Lower lobe of right lung (tissue), 2 donors: ENCODE measurements at regions of chr6 and their contacts with region 1.

Region 1: GRCh38 chr6:143575440-143575839 is 63.9 kb upstream of the FUCA2 start:
- DNase-seq: no peak
- ATAC-seq: peak; percentile 92 to 93
- H3K4me3 ChIP-seq: no peak overlapping the region
- H3K27ac ChIP-seq: no peak overlapping the region
- H3K4me1 ChIP-seq: no peaks in the 10 kb centered on the region
- H3K27me3 ChIP-seq: no peaks in the 10 kb centered on the region
- CTCF ChIP-seq: peak; percentile 91

Region 2: GRCh38 chr6:143822584-143823024 is 247.2 kb after region 1 on chr6:
- intact Hi-C with region 1: no loop called
- DNase-seq: no peak
- ATAC-seq: peak; percentile 49 to 76
- H3K4me3 ChIP-seq: no peak overlapping the region
- H3K27ac ChIP-seq: no peak overlapping the region
- H3K4me1 ChIP-seq: peaks cover 11% of the 10 kb centered on the region
- H3K27me3 ChIP-seq: no peaks in the 10 kb centered on the region
- CTCF ChIP-seq: no peak

Region 3: DNA sequence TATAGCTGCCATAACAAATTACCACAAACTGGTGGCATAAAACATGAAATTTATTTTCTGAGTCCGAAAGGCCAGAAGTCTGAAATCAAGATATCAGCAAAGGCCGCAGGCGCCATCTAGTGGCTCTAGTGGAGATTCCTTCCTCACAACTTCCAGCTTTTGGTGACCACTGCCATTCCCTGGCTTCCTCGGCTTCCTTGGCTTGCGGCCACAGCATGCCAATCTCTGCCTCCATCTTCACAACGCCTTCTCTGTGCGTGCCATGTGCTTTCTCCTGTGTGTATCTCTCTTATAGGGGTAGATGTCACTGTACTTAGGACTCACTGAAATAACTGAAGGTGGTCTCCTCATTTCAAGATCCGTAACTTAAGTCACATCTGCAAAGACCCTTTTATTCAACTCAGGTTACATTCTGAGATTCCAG is 438.1 kb after region 1 on chr6:
- intact Hi-C with region 1: loop called (anchors 10 kb)
- DNase-seq: peak; percentile 87
- ATAC-seq: peak; percentile 82 to 83
- H3K4me3 ChIP-seq: no peak overlapping the region
- H3K27ac ChIP-seq: no peak overlapping the region
- H3K4me1 ChIP-seq: no peaks in the 10 kb centered on the region
- H3K27me3 ChIP-seq: no peaks in the 10 kb centered on the region
- CTCF ChIP-seq: peak; percentile 91